CD4-positive, alpha-beta T cell (primary cell): ENCODE measurements at regions of chr11 and their contacts with region 1.

Region 1: GRCh38 chr11:48020092-48020755 is 39.9 kb downstream of the PTPRJ start:
- DNase-seq: peak in 4 of 14 experiments; percentile 24 to 84 (median 75)
- ATAC-seq: peak; percentile 43
- H3K4me3 ChIP-seq: peak overlapping the region; percentile 6
- H3K4me3 Mint-ChIP-seq: peak overlapping the region; percentile 71
- H3K27ac ChIP-seq: peak overlapping the region; percentile 0 to 68
- H3K27ac Mint-ChIP-seq: peak overlapping the region; percentile 90
- H3K4me1 ChIP-seq: peaks cover 60% of the 10 kb centered on the region
- H3K4me1 Mint-ChIP-seq: peaks cover 74% of the 10 kb centered on the region
- H3K27me3 ChIP-seq: no peaks in the 10 kb centered on the region
- H3K27me3 Mint-ChIP-seq: no peaks in the 10 kb centered on the region
- CTCF ChIP-seq: no peak

Region 2: GRCh38 chr11:47980245-47981049 is 39.8 kb before region 1 on chr11 and contains the start of gene PTPRJ:
- CTCF ChIA-PET with region 1: interaction called, 8 read pairs
- POLR2A ChIA-PET with region 1: interaction called, 4 read pairs
- intact Hi-C with region 1: loop called (anchors 5 kb)
- DNase-seq: peak; percentile 36 to 88 (median 57)
- ATAC-seq: peak; percentile 68
- H3K4me3 ChIP-seq: peak within 1 kb of the TSS; percentile 70
- H3K4me3 Mint-ChIP-seq: peak within 1 kb of the TSS; percentile 98
- H3K27ac ChIP-seq: peak within 1 kb of the TSS in 1 of 2 donors; percentile 41
- H3K27ac Mint-ChIP-seq: peak within 1 kb of the TSS; percentile 91
- H3K4me1 ChIP-seq: peaks cover 39% of the 10 kb centered on the region
- H3K4me1 Mint-ChIP-seq: peaks cover 38% of the 10 kb centered on the region
- H3K27me3 ChIP-seq: no peaks in the 10 kb centered on the region
- H3K27me3 Mint-ChIP-seq: no peaks in the 10 kb centered on the region
- CTCF ChIP-seq: no peak
- total RNA-seq, gene PTPRJ: 26.6 to 28.9 TPM

Region 3: DNA sequence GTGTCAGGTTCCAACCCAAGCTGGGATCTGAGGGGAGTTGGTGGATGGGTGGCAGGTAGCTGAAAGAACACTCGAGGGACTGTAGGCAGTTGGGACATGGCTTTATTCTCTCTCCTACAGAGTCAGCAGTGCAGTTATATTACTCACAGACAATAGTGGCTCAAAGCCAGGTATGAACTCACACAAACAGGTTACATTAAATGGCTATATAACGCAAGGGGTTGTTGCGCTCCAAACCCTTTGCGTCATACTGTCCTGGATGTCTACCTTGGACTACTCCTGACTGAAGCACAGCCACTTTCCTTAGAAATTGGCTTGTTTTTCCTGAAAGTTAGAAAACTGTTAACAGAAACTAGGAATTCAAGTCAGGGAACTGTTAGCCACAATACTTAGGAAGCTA is 130.0 kb after region 1 on chr11:
- CTCF ChIA-PET with region 1: no interaction called
- POLR2A ChIA-PET with region 1: no interaction called
- intact Hi-C with region 1: no loop called
- DNase-seq: no peak
- ATAC-seq: no peak
- H3K4me3 ChIP-seq: no peak overlapping the region
- H3K4me3 Mint-ChIP-seq: no peak overlapping the region
- H3K27ac ChIP-seq: no peak overlapping the region
- H3K27ac Mint-ChIP-seq: no peak overlapping the region
- H3K4me1 ChIP-seq: peaks cover 7% of the 10 kb centered on the region
- H3K4me1 Mint-ChIP-seq: no peaks in the 10 kb centered on the region
- H3K27me3 ChIP-seq: no peaks in the 10 kb centered on the region
- H3K27me3 Mint-ChIP-seq: no peaks in the 10 kb centered on the region
- CTCF ChIP-seq: no peak